ENCODE measurements at regions of chr3 and their contacts with region 1.

Region 1: GRCh38 chr3:38689774-38690173 is 40.3 kb upstream of the SCN5A start:
- DNase-seq: no peak
- ATAC-seq: peak in 2 of 4 donors; percentile 50 to 52
- H3K4me3 ChIP-seq: no peak overlapping the region
- H3K27ac ChIP-seq: no peak overlapping the region
- H3K4me1 ChIP-seq: no peaks in the 10 kb centered on the region
- H3K27me3 ChIP-seq: no peaks in the 10 kb centered on the region
- CTCF ChIP-seq: peak in 8 of 12 donors; percentile 5 to 35 (median 28)
- POLR2A ChIP-seq: no peak

Region 2: DNA sequence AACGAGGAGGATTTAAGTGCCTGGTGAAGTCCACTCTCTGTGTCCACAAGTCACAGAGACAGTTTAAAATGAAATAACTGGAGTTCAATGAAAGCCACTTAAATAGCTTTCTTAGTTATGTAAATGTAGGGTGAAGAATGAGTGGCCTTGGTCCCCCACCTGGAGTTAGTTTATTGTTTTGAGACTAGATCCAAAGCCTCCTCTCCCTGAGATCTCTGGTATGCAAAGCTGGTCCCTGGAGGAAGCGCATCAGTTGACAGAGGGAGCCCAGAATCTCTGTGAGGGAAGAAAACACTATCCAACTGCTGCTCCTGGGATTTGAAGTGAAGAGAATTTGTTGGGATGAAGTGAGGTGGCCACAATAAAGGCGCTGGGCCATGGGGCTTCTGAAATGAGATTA is 153.1 kb before region 1 on chr3:
- intact Hi-C with region 1: no loop called
- DNase-seq: no peak
- ATAC-seq: no peak
- H3K4me3 ChIP-seq: no peak overlapping the region
- H3K27ac ChIP-seq: peak overlapping the region in 9 of 12 donors; percentile 3 to 96 (median 76)
- H3K4me1 ChIP-seq: peaks cover 0 to 75% (median 26%) of the 10 kb centered on the region in 12 donors
- H3K27me3 ChIP-seq: no peaks in the 10 kb centered on the region
- CTCF ChIP-seq: no peak
- POLR2A ChIP-seq: no peak

Region 3: GRCh38 chr3:38548159-38548931 is 141.4 kb before region 1 on chr3:
- intact Hi-C with region 1: no loop called
- DNase-seq: peak in 3 of 5 donors; percentile 36 to 58 (median 56)
- ATAC-seq: peak in 3 of 4 donors; percentile 2 to 41 (median 10)
- H3K4me3 ChIP-seq: no peak overlapping the region
- H3K27ac ChIP-seq: peak overlapping the region in 11 of 12 donors; percentile 28 to 96 (median 78)
- H3K4me1 ChIP-seq: peaks cover 0 to 42% (median 14%) of the 10 kb centered on the region in 12 donors
- H3K27me3 ChIP-seq: no peaks in the 10 kb centered on the region
- CTCF ChIP-seq: no peak
- POLR2A ChIP-seq: no peak

Region 4: GRCh38 chr3:39000008-39000450 is 310.3 kb after region 1 on chr3:
- intact Hi-C with region 1: loop called in 1 of 10 experiments (anchors 5 kb)
- DNase-seq: no peak
- ATAC-seq: peak in 3 of 4 donors; percentile 47 to 59 (median 49)
- H3K4me3 ChIP-seq: no peak overlapping the region
- H3K27ac ChIP-seq: no peak overlapping the region
- H3K4me1 ChIP-seq: no peaks in the 10 kb centered on the region
- H3K27me3 ChIP-seq: peaks cover 0 to 2% (median 0%) of the 10 kb centered on the region in 9 donors
- CTCF ChIP-seq: peak; percentile 40 to 79 (median 62)
- POLR2A ChIP-seq: no peak

Measured in heart left ventricle (tissue), 16 donors.